ENCODE measurements at regions of chr4 and their contacts with region 1.

Region 1: GRCh38 chr4:119729835-119730670 is 101.4 kb upstream of the PDE5A start:
- DNase-seq: peak; percentile 93
- H3K4me3 ChIP-seq: no peak overlapping the region
- H3K27ac ChIP-seq: peak overlapping the region; percentile 24
- H3K4me1 ChIP-seq: peaks cover 21% of the 10 kb centered on the region
- H3K27me3 ChIP-seq: no peaks in the 10 kb centered on the region
- CTCF ChIP-seq: no peak
- POLR2A ChIP-seq: no peak

Region 2: GRCh38 chr4:119638359-119638758 is 91.7 kb before region 1 on chr4:
- CTCF ChIA-PET with region 1: no interaction called
- POLR2A ChIA-PET with region 1: no interaction called
- dilution Hi-C with region 1: no loop called
- intact Hi-C with region 1: no loop called
- DNase-seq: no peak
- H3K4me3 ChIP-seq: no peak overlapping the region
- H3K27ac ChIP-seq: no peak overlapping the region
- H3K4me1 ChIP-seq: no peaks in the 10 kb centered on the region
- H3K27me3 ChIP-seq: peaks cover 2 to 5% of the 10 kb centered on the region in 2 experiments
- CTCF ChIP-seq: no peak
- POLR2A ChIP-seq: no peak

Region 3: GRCh38 chr4:119648398-119648797 is 81.7 kb before region 1 on chr4:
- CTCF ChIA-PET with region 1: no interaction called
- POLR2A ChIA-PET with region 1: no interaction called
- dilution Hi-C with region 1: no loop called
- intact Hi-C with region 1: no loop called
- DNase-seq: no peak
- H3K4me3 ChIP-seq: no peak overlapping the region
- H3K27ac ChIP-seq: no peak overlapping the region
- H3K4me1 ChIP-seq: no peaks in the 10 kb centered on the region
- H3K27me3 ChIP-seq: no peaks in the 10 kb centered on the region
- CTCF ChIP-seq: no peak
- POLR2A ChIP-seq: no peak

Region 4: GRCh38 chr4:119659616-119660015 is 70.4 kb before region 1 on chr4:
- CTCF ChIA-PET with region 1: no interaction called
- POLR2A ChIA-PET with region 1: no interaction called
- dilution Hi-C with region 1: no loop called
- intact Hi-C with region 1: loop called (anchors 5 kb)
- DNase-seq: no peak
- H3K4me3 ChIP-seq: no peak overlapping the region
- H3K27ac ChIP-seq: no peak overlapping the region
- H3K4me1 ChIP-seq: peaks cover 19% of the 10 kb centered on the region
- H3K27me3 ChIP-seq: no peaks in the 10 kb centered on the region
- CTCF ChIP-seq: no peak
- POLR2A ChIP-seq: no peak

Region 5: GRCh38 chr4:120694973-120695372 is 964.9 kb after region 1 on chr4:
- CTCF ChIA-PET with region 1: no interaction called
- POLR2A ChIA-PET with region 1: no interaction called
- dilution Hi-C with region 1: no loop called
- intact Hi-C with region 1: no loop called
- DNase-seq: peak; percentile 68
- H3K4me3 ChIP-seq: no peak overlapping the region
- H3K27ac ChIP-seq: no peak overlapping the region
- H3K4me1 ChIP-seq: peaks cover 6% of the 10 kb centered on the region
- H3K27me3 ChIP-seq: no peaks in the 10 kb centered on the region
- CTCF ChIP-seq: no peak
- POLR2A ChIP-seq: no peak